HCT116 (cell line): ENCODE measurements at regions of chr19 and their contacts with region 1.

Region 1: DNA sequence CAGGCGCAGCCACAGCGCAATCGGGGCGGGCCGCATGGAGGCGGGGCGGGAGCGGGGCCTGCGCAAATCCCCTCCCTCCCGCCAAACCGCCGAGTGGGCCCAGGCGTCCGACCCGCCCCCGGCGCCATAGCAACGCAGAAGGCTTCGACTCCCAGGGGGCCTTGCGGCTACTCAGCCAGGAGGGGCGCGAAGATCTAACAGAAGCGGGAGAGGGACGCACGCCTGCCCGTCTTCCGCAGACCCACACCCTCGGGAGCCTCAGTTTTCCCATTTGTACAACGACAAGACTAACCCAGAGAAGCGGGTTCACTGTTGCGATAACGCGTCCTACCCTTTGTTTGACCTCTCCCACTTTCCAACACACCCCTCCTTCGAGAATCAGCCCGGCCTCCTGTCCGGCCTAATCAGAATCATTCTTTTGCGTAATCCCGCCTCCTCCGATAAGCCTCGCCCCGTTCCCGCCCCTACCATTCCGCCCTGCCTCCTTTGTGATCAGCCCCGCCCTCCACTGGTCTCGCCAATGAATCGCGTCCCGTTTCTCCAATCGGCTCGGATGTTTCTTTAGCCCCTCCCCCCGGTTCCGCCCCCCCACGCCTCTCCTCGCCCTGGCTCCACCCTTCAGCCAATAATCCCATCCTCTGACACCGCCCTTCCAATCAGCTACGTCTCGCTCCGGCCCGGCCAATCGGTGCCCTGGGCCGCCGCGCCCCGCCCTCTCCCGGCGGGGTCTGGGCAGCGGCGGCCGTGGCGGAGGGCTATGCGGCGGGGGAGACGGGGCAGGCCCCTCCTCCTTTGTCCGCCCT is at the start of gene PCSK4:
- DNase-seq: peak; percentile 98
- ATAC-seq: peak; percentile 91
- H3K4me3 ChIP-seq: peak within 1 kb of the TSS; percentile 78 to 85
- H3K27ac ChIP-seq: peak within 1 kb of the TSS; percentile 78
- H3K4me1 ChIP-seq: peaks cover 19 to 33% of the 10 kb centered on the region in 2 experiments
- H3K27me3 ChIP-seq: no peaks in the 10 kb centered on the region
- CTCF ChIP-seq: no peak
- POLR2A ChIP-seq: peak; percentile 40
- RAD21 ChIP-seq: no peak
- total RNA-seq, gene PCSK4: 11.1 TPM

Region 2: GRCh38 chr19:1295169-1296012 is 195.1 kb before region 1 on chr19:
- CTCF ChIA-PET with region 1: no interaction called
- POLR2A ChIA-PET with region 1: no interaction called
- RAD21 ChIA-PET with region 1: no interaction called
- intact Hi-C with region 1: no loop called
- DNase-seq: no peak
- ATAC-seq: peak; percentile 58
- H3K4me3 ChIP-seq: no peak overlapping the region
- H3K27ac ChIP-seq: no peak overlapping the region
- H3K4me1 ChIP-seq: peaks cover 12 to 19% of the 10 kb centered on the region in 2 experiments
- H3K27me3 ChIP-seq: no peaks in the 10 kb centered on the region
- CTCF ChIP-seq: no peak
- POLR2A ChIP-seq: no peak
- RAD21 ChIP-seq: no peak

Region 3: GRCh38 chr19:1455336-1456120 is 35.0 kb before region 1 on chr19:
- CTCF ChIA-PET with region 1: no interaction called
- POLR2A ChIA-PET with region 1: interaction called, 6 read pairs
- RAD21 ChIA-PET with region 1: no interaction called
- intact Hi-C with region 1: loop called (anchors 1 kb)
- DNase-seq: peak; percentile 97
- ATAC-seq: peak; percentile 87
- H3K4me3 ChIP-seq: peak overlapping the region; percentile 40 to 62
- H3K27ac ChIP-seq: peak overlapping the region; percentile 65
- H3K4me1 ChIP-seq: peaks cover 23 to 47% of the 10 kb centered on the region in 2 experiments
- H3K27me3 ChIP-seq: no peaks in the 10 kb centered on the region; the same call in 1 of the 2 replicates
- CTCF ChIP-seq: no peak
- POLR2A ChIP-seq: peak; percentile 22
- RAD21 ChIP-seq: no peak

Region 4: DNA sequence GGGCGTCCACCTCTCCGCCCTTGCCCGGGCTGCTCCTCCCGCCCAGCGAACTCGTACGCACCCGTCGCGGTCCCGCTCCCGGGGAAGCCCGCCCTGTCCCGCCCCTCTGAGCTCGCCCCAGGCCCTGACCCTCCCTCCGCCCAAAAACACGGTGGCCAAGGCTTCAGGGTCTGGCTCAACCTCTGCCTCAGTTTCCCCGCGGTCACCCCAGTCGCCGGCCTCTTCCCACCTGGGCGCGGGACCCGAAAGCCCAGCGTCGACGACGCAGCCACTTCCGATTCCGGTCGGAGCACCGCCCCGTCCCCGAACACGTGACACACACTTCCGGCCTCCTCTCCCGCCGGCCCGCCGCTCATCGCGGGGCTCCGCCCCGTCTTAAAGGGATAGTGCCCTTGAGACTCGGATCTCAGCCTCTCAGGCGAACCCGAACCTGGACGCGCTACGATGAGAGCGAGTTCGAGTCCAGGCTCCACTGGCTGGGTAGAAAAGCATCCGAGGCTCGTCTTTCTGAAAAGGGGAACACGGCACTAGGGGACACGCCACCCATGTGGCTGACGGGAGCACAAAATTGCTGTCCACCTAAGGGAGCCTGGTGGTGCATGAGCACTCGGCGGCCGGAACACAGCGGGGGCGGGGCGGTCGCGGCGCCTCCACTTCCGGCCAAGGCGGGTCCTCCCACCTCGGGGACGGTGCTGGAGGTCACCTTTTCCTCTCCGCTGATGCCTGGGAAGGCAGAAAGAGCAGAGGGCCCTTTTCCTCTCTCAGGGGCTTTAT is 11.4 kb before region 1 on chr19 and contains the start of gene C19orf25:
- CTCF ChIA-PET with region 1: interaction called, 3 read pairs
- POLR2A ChIA-PET with region 1: interaction called, 4 read pairs
- RAD21 ChIA-PET with region 1: no interaction called
- intact Hi-C with region 1: loop called (anchors 1 kb)
- DNase-seq: peak; percentile 86
- ATAC-seq: peak; percentile 87
- H3K4me3 ChIP-seq: peak within 1 kb of the TSS; percentile 85 to 96
- H3K27ac ChIP-seq: peak within 1 kb of the TSS; percentile 89
- H3K4me1 ChIP-seq: peaks cover 5 to 21% of the 10 kb centered on the region in 2 experiments; a peak in 3 of 4 replicates
- H3K27me3 ChIP-seq: no peaks in the 10 kb centered on the region
- CTCF ChIP-seq: no peak
- POLR2A ChIP-seq: peak; percentile 83
- RAD21 ChIP-seq: no peak
- total RNA-seq, gene C19orf25: 48.8 TPM